ENCODE measurements at regions of chr17 and their contacts with region 1.

Region 1: DNA sequence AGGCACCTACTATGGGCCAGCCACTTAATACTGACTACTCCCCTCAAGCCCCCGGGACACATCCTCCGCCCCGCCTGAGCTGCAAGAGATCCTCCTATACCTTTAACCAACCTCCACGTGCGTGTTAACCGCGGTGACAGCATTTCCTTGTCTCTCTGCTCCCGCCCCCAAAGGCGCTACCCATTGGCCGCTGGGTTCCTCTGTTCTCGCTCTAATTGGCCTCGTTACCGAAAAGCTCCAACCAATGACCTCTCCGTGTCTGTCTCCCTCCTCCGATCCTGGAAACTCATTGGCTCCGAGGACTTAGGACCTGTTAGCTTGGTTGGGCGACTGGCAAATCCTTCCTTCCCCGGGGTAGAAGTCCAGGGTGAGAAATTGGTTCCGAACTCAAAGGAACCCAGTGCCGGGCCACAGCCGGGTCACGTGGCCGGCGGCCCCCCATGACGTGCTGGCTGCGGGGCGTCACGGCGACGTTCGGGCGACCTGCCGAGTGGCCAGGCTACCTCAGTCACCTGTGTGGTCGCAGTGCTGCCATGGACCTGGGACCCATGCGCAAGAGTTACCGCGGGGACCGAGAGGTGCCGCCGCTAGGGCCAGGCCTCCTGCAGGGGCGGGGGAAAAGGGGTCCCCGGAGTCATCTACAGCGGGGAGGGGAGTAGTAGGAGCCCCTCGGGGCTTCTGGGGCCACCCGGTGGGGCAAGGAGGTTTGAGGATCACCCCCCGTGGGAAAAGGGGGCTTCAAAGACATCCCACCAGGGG is at the start of gene PNPO:
- DNase-seq: peak; percentile 99 to 100
- ATAC-seq: peak; percentile 97 to 100
- H3K4me3 ChIP-seq: peak within 1 kb of the TSS; percentile 71
- H3K27ac ChIP-seq: peak within 1 kb of the TSS; percentile 87 to 93
- H3K4me1 ChIP-seq: peaks cover 29% of the 10 kb centered on the region
- CTCF ChIP-seq: no peak
- EP300 ChIP-seq: no peak
- POLR2A ChIP-seq: peak; percentile 82
- RAD21 ChIP-seq: no peak
- polyA plus RNA-seq, gene PNPO: 40.8 and 43.4 TPM in 2 replicates

Region 2: DNA sequence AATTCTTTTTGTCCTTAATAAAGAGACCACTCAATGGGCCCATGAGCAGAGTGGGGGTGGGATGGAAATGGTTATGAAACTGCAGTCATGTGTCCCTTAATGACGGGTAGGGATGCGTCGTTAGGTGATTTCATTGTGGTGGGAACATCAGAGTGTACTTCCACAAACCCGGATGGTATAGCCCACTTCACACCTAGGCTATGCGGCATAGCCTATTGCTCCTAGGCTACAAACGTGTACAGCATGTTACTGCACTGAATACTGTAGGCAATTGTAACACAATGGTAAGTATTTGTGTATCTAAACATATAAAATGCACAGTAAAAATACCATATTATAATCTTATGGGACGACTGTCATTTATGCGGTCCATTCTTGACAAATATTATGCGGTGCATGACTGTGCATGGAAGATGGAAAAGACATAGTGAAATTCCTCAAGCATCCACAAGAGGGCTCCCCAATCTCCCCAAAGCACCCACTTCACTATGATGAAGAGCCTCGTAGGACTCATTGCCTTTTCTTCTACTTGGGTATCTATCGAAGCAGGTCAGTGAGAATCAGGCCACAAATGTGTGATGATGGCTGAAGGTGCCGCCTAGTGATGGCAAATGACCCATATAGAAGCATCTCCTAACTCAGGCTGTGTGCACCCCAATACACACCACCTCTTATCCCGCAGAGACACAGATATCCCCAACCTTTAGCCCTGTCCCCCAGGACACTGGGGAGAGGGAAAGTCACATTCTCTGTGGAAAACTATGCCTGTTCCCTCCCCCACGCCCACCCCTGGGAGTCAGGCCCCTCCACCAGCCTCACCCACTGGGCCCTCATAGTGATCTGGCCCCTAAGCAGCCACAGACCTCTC is 164.9 kb before region 1 on chr17:
- CTCF ChIA-PET with region 1: no interaction called
- POLR2A ChIA-PET with region 1: no interaction called
- DNase-seq: peak; percentile 71 to 78
- ATAC-seq: peak; percentile 82 to 94
- H3K4me3 ChIP-seq: no peak overlapping the region
- H3K27ac ChIP-seq: no peak overlapping the region
- H3K4me1 ChIP-seq: no peaks in the 10 kb centered on the region
- CTCF ChIP-seq: peak; percentile 83
- EP300 ChIP-seq: no peak
- POLR2A ChIP-seq: no peak
- RAD21 ChIP-seq: peak; percentile 65 to 71

Region 3: DNA sequence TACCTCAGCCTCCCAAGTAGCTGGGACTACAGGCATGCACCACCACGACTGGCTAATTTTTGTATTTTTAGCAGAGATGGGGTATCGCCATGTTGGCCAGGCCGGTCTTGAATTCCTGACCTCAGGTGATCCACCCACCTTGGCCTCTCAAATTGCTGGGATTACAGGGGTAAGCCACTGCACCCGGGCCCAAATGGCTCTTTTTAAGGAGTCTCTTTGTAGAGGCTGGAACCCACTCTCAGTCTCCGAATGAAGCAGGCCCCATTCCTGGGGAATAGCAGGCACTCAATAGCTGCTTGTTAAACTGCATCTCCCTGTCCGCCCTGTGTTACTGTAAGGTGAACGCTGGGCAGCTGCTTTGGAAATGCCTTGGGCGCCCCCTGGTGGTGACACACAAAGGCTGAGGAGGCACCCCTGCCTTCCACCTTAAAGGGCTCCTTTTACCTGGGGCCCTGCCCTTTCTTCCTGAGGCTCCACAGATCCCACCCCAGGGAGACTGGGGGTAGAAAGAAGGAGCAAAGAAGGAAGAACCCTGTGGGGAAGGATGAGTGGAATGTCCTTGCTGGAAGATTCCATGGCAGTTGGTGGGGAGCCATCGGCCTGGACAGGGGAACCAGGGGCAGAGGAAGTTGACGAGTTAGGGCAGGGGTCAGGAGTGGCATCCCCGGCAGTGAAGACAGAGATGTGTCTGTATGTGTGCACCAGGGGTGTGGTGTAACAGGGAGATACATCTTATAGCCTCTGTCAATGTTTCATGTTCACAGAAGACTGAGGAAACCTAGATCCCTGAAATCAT is 51.5 kb before region 1 on chr17:
- CTCF ChIA-PET with region 1: interaction called, 46 read pairs
- POLR2A ChIA-PET with region 1: interaction called, 35 read pairs
- DNase-seq: peak; percentile 85 to 90
- ATAC-seq: peak; percentile 95 to 98
- H3K4me3 ChIP-seq: no peak overlapping the region
- H3K27ac ChIP-seq: no peak overlapping the region
- H3K4me1 ChIP-seq: peaks cover 23% of the 10 kb centered on the region; the same call in 2 of the 3 replicates
- CTCF ChIP-seq: peak; percentile 99
- EP300 ChIP-seq: no peak
- POLR2A ChIP-seq: no peak
- RAD21 ChIP-seq: peak; percentile 100

Region 4: DNA sequence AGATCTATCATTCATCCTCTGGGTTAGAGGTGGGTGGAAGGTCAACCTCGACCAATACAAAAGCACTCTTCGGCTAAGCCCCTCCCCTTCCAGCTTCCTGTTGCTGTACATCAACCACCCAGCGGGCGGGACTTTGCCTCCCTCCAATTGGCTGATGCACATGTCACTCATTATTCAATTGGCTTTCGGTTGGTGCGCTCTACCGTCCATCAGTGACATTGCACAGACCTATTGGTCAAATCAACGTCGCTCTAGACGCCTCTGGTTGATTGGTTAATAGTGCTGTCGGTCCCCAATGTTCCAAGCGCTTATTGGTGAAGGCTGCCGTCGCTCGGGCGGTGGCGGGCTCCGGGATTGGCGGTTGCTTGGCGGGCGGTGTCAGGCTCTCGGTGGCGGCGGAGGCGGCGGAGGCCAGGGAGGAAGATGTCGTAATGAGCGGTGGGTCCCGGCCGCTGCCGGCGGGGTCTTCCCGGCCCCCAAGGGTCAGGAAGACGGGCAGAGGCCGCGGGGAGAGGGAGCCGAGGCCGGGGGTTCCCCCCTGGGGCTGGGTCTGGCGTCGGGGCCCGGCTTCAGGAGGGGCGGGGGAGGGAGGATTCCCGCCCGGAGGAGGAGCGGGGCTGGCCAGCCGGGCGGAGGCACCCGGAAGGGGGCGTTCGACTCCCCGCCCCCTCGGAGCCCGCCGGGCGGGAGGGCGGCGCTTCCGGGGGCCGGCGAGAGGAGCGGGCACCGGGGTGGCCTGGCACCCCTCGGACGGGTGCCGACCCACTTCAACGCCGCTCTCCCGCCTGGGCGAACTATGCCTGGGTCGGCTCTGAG is 45.4 kb before region 1 on chr17 and contains the start of gene SP2:
- CTCF ChIA-PET with region 1: interaction called, 46 read pairs
- POLR2A ChIA-PET with region 1: interaction called, 35 read pairs
- DNase-seq: peak; percentile 100
- ATAC-seq: peak; percentile 88 to 95
- H3K4me3 ChIP-seq: peak within 1 kb of the TSS; percentile 86
- H3K27ac ChIP-seq: peak within 1 kb of the TSS; percentile 95 to 96
- H3K4me1 ChIP-seq: peaks cover 16% of the 10 kb centered on the region; the same call in 2 of the 3 replicates
- CTCF ChIP-seq: no peak
- EP300 ChIP-seq: no peak
- POLR2A ChIP-seq: peak; percentile 91
- RAD21 ChIP-seq: no peak
- polyA plus RNA-seq, gene SP2: 6.2 and 8.0 TPM in 2 replicates

Region 5: DNA sequence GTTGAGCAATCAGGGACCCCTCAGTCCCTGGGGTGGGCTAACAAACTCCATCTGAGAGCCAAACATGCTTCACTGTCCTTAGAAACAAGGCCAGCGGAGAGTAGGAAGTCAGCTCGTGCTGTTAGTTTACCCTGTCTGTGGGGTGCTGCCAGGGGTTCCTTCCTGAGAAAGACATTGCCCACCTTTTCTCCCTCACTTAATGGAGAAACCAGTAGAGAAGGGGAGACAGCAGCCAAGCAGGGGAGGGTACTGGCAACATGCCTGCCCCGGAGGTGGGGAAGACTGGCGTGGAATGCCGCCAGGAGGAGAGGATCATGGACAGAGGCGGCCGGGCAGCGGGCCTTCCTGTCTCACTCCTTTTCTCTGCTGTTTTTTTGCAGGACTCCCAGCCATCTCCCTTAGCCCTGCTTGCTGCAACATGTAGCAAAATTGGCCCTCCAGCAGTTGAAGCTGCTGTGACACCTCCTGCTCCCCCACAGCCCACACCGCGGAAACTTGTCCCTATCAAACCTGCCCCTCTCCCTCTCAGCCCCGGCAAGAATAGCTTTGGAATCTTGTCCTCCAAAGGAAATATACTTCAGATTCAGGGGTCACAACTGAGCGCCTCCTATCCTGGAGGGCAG is 25.5 kb before region 1 on chr17:
- CTCF ChIA-PET with region 1: interaction called, 320 read pairs
- POLR2A ChIA-PET with region 1: interaction called, 10 read pairs
- DNase-seq: no peak
- ATAC-seq: no peak; a peak in 1 of 6 replicates
- H3K4me3 ChIP-seq: no peak overlapping the region
- H3K27ac ChIP-seq: no peak overlapping the region
- H3K4me1 ChIP-seq: 0 out of 3 replicates have a peak, but pooled peaks cover 3% of the 10 kb centered on the region
- CTCF ChIP-seq: no peak
- EP300 ChIP-seq: no peak
- POLR2A ChIP-seq: no peak
- RAD21 ChIP-seq: no peak

Region 6: DNA sequence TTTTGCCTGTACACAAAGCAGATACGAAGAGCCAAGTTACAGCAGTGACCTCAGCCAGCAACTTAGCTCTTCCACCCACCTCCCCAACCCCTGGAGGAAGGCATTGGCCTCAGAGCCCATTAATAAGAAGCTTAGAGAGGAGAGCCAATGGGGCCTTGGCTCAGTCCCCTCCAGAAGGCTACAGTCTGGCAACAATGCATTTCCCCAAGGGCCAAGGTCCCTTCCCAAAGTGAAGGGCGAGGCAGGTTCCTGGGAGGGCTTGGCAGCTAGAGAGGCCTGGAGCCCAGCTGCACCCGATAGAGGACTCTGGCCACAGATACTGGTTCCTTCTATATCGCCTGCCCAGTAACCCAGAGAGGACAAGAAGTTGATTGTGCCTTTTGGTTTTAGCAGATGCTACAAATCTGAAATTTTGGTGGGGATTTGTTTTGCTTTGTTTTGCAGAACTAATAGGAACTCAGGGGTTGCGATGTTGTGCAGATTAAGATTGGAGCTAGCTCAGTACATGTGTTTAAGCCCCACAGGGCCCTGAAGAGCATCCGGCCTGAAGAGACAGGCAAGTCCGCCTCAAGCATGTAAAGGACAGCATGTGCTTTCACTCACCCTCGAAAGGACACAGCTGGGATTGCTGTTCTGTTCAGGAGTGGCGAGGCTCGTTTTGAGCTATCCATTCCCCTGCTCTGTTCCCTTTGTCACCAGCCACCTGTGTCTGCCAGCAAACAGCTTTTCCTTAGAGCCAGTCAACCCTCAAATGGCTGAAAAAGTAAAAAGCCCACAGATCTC is 12.0 kb before region 1 on chr17:
- CTCF ChIA-PET with region 1: interaction called, 320 read pairs
- POLR2A ChIA-PET with region 1: interaction called, 13 read pairs
- DNase-seq: no peak
- ATAC-seq: no peak; a peak in 1 of 6 replicates
- H3K4me3 ChIP-seq: no peak overlapping the region
- H3K27ac ChIP-seq: peak overlapping the region in 1 of 2 experiments; percentile 4; a peak in 1 of 6 replicates
- H3K4me1 ChIP-seq: peaks cover 2% of the 10 kb centered on the region; the same call in 1 of the 3 replicates
- CTCF ChIP-seq: no peak
- EP300 ChIP-seq: no peak
- POLR2A ChIP-seq: no peak
- RAD21 ChIP-seq: no peak

Region 7: DNA sequence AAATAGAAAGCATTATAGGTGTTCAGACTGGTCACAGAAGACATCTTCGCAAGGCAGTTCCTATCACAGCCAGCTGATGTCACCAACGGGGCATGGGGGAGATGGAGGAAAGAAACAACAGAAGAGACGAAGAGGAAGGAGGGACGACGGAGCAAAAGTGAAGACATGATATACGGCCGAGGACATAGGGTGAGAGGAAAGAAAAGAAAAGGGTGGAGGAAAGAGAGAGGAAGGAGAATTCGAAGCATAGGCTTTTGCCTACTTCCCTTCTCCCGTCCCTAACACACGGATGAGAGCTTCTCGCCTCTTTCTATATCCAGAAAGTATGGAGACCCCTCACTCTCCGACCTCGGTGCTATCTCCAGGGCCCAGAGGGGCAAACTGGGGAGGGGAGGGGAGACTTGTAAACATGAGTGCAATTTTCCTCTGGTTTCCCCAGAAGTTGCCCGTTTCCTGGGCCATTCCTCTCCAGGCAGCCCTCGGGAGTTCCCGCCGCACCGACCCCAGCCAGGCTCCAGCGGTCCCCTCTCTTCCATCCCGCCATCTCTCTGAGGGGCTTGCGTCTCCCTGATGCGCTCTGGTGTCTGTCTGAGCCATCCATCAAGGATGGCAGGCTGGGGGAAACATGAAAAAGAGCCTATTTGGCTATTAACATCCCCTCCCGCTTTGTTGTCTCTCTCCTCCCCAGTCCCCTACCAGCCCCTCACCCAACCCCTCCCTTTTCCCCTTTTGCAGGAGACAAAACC is 70.2 kb after region 1 on chr17:
- CTCF ChIA-PET with region 1: interaction called, 513 read pairs
- POLR2A ChIA-PET with region 1: no interaction called
- DNase-seq: peak; percentile 66 to 78
- ATAC-seq: peak; percentile 83 to 87
- H3K4me3 ChIP-seq: no peak overlapping the region
- H3K27ac ChIP-seq: peak overlapping the region; percentile 10 to 34; a peak in 5 of 6 replicates
- H3K4me1 ChIP-seq: 0 out of 3 replicates have a peak, but pooled peaks cover 3% of the 10 kb centered on the region
- CTCF ChIP-seq: peak; percentile 39; the same call in 2 of the 3 replicates
- EP300 ChIP-seq: no peak
- POLR2A ChIP-seq: no peak
- RAD21 ChIP-seq: peak; percentile 23 to 61; a peak in 3 of 5 replicates

Measured in A549 (cell line).